ENCODE measurements at regions of chr21 and their contacts with region 1.

Region 1: DNA sequence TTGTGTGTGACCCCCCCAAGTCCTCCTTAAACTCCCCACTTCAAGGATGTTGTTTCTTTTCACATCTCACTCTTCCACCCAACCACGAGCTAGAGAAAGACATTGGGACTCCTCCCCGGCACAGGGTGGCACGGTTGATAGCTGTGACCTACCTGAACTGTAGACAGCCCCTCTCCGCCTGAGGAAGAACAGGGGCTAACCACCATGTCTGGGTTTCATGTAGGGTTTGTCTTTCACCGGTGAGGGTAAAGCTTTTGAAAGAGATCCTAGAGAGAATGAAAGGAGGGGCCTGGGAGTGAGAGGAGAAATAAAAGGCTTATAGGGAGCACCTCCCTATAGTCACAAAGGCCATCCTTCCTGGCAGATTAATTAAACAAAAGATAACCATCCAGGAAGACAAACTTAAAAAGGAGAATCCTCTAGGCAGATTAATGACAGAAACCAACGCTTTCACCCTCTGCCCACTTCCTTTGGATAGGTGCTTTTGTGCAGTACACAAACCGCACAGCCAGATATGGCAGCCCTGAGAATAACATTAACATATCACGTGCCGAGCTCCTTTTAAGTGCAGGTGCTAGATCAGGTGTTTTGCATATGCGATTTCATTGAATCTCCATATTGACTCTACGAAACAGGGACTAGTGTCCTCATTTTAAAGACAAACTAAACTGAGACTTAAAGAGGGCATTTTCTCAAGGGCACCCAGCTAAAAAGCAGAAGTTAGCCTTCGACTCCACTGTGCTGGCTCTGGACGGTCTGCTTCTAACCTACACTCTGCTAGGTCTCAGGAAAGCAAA is 178.0 kb upstream of the RUNX1 start:
- DNase-seq: peak; percentile 76
- H3K4me3 Mint-ChIP-seq: peak overlapping the region; percentile 49
- H3K27ac Mint-ChIP-seq: peak overlapping the region; percentile 62
- H3K4me1 Mint-ChIP-seq: peaks cover 38% of the 10 kb centered on the region
- H3K27me3 Mint-ChIP-seq: no peaks in the 10 kb centered on the region

Region 2: DNA sequence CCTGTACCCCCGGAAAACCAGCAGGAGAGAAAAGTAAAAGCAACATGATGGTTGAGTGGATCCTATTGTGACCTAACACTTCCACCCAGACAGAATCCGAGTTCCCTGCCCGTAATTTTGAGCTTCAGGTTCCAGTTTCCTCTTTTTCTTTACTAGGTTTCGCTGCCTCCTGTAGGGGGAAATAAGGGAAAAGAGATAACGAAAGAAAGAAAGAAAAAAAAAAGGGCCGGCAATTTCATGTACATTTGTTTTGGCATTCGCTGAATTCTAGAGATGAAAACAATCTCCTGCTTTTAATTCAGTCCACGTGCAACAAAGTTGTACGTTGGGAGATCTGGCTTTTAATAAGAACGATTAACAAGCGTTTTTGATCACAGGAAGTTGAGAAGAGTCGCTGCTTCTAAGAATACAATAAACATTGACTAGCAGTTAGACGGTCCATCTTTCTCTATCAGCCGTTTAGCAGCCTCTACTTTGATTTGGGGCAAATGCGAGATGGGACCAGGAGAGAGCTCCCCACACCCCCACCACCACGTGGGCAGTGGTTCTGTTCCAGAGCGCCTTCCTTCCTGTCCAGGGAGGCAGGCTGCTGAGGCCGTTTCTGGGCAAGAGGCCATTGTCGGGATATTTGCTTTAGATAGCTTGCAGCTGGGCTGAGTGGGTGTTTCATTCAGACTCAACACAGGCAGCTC is 22.1 kb before region 1 on chr21:
- CTCF ChIA-PET with region 1: no interaction called
- POLR2A ChIA-PET with region 1: no interaction called
- intact Hi-C with region 1: loop called (anchors 2 kb)
- DNase-seq: no peak
- H3K4me3 Mint-ChIP-seq: peak overlapping the region; percentile 54
- H3K27ac Mint-ChIP-seq: peak overlapping the region; percentile 38
- H3K4me1 Mint-ChIP-seq: peaks cover 30% of the 10 kb centered on the region
- H3K27me3 Mint-ChIP-seq: peaks cover 2% of the 10 kb centered on the region

Region 3: GRCh38 chr21:35254006-35254764 is 27.0 kb after region 1 on chr21:
- CTCF ChIA-PET with region 1: no interaction called
- POLR2A ChIA-PET with region 1: no interaction called
- intact Hi-C with region 1: loop called (anchors 2 kb)
- DNase-seq: no peak
- H3K4me3 Mint-ChIP-seq: no peak overlapping the region
- H3K27ac Mint-ChIP-seq: no peak overlapping the region
- H3K4me1 Mint-ChIP-seq: peaks cover 43% of the 10 kb centered on the region
- H3K27me3 Mint-ChIP-seq: no peaks in the 10 kb centered on the region

Measured in activated CD4-positive, alpha-beta memory T cell treated with anti-CD3 and anti-CD28 coated beads for 36 hours (primary cell).